PC-3 (cell line): ENCODE measurements at regions of chr12 and their contacts with region 1.

Region 1: GRCh38 chr12:92928962-92929915 is at the start of gene EEA1:
- DNase-seq: peak; percentile 96
- ATAC-seq: peak; percentile 85
- H3K4me3 ChIP-seq: peak within 1 kb of the TSS; percentile 82
- H3K27ac ChIP-seq: peak within 1 kb of the TSS; percentile 74
- H3K4me1 ChIP-seq: peaks cover 24% of the 10 kb centered on the region
- H3K27me3 ChIP-seq: no peaks in the 10 kb centered on the region
- CTCF ChIP-seq: no peak
- total RNA-seq, gene EEA1: 7.9 and 11.9 TPM in 2 replicates

Region 2: DNA sequence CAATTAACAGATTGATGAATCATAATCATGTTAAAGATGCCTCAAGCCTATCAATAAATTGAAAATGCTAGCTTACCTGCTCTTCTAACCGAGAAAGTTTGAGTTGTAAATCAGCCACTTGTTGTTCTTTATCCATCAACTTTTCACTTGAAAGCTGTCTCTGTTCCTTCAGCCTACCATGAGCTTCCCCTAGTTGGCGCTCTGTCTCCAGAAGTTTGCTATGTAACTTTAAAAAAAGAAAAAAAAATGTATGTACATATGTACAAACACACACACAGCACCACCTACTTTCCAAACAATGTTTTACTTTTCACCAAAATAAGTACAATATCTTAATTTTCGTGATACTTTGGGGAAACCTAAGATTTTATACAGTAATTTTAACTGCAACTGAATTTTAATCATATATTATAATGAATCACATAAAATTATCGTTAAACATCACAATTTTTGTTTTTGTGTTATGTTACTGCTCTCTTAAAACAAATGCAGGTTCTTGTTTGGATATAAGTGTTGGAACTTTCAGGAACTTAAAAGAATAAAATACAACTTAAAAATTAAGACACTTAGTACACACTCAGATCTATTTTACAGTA is 101.3 kb before region 1 on chr12:
- CTCF ChIA-PET with region 1: interaction called, 12 read pairs
- POLR2A ChIA-PET with region 1: no interaction called
- intact Hi-C with region 1: loop called (anchors 5 kb)
- DNase-seq: peak; percentile 72
- ATAC-seq: peak; percentile 53
- H3K4me3 ChIP-seq: no peak overlapping the region
- H3K27ac ChIP-seq: no peak overlapping the region
- H3K4me1 ChIP-seq: no peaks in the 10 kb centered on the region
- H3K27me3 ChIP-seq: no peaks in the 10 kb centered on the region
- CTCF ChIP-seq: peak; percentile 96

Region 3: DNA sequence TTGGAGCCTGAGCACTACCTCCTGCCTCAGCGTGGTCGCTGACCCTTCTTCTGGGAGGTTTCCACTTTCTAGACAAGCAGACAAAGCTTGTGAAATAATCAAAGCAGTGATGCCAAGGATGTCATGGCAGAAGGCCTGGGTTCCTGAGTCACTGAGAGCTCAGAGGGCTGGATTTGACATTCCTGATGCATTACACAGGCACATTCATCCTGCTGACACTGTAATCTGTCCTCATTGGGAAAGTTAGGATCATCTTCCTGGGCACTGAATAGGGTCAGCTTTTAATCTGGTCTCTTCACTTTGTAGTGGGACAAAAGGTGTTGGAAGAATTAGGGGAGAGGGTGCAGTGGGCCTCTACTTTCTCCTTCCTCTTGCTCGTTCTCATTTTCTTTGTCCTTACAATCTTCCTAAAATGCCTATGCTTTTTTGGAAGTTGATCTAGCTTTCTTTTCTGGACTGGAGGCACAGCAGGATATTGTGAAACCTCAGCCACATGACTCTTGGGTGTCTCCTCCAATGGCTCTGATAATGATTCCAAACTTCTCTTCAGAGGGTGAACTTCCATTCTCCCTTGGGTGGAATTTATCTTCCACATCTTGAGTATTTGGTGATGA is 29.7 kb before region 1 on chr12:
- CTCF ChIA-PET with region 1: no interaction called
- POLR2A ChIA-PET with region 1: interaction called, 3 read pairs
- intact Hi-C with region 1: loop called (anchors 1 kb)
- DNase-seq: peak; percentile 98
- ATAC-seq: peak; percentile 98
- H3K4me3 ChIP-seq: peak overlapping the region; percentile 47; the same call in 1 of the 2 replicates
- H3K27ac ChIP-seq: peak overlapping the region; percentile 82
- H3K4me1 ChIP-seq: peaks cover 30% of the 10 kb centered on the region
- H3K27me3 ChIP-seq: no peaks in the 10 kb centered on the region
- CTCF ChIP-seq: no peak

Region 4: GRCh38 chr12:92943482-92944250 is 14.4 kb after region 1 on chr12:
- CTCF ChIA-PET with region 1: no interaction called
- POLR2A ChIA-PET with region 1: interaction called, 15 read pairs
- intact Hi-C with region 1: no loop called
- DNase-seq: no peak
- ATAC-seq: peak; percentile 42; the same call in 1 of the 2 replicates
- H3K4me3 ChIP-seq: no peak overlapping the region
- H3K27ac ChIP-seq: no peak overlapping the region
- H3K4me1 ChIP-seq: 0 out of 2 replicates have a peak, but pooled peaks cover 4% of the 10 kb centered on the region
- H3K27me3 ChIP-seq: no peaks in the 10 kb centered on the region
- CTCF ChIP-seq: peak; percentile 32; the same call in 1 of the 2 replicates

Region 5: DNA sequence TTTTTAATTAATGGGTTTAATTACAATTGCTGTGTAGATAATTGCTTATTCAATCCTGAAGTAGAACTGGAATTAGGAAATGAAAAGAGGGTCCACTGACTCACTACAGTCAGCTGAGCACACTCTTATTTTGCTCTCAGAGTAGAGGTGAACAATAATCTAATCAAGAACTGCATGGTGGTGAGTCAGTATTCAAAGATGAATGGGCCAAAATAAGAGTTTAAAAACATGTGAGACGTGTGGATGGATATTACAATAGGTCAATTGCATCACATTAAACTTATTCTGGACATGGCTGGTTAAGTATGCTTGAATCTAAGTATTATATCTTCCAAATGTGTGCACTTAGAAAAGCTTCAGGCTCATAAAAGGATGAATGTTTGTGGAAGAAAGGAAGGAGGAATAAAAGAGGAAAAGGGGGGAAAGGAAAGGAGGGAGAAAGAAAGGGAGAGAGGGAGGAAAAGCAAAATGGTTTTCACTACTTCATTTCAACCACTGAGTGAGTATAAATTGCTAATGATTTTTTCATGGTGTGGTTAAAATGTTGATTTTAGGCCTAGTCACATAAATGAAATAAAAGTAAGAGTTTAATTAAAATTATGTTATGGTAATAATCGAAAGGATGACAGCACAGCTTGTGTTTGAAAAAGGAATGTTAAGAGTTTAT is 26.9 kb after region 1 on chr12:
- CTCF ChIA-PET with region 1: no interaction called
- POLR2A ChIA-PET with region 1: no interaction called
- intact Hi-C with region 1: no loop called
- DNase-seq: no peak
- ATAC-seq: no peak
- H3K4me3 ChIP-seq: no peak overlapping the region
- H3K27ac ChIP-seq: no peak overlapping the region
- H3K4me1 ChIP-seq: no peaks in the 10 kb centered on the region
- H3K27me3 ChIP-seq: no peaks in the 10 kb centered on the region
- CTCF ChIP-seq: no peak

Region 6: GRCh38 chr12:92973601-92974000 is 44.4 kb after region 1 on chr12:
- CTCF ChIA-PET with region 1: no interaction called
- POLR2A ChIA-PET with region 1: interaction called, 3 read pairs
- intact Hi-C with region 1: loop called (anchors 5 kb)
- DNase-seq: peak; percentile 73
- ATAC-seq: no peak
- H3K4me3 ChIP-seq: no peak overlapping the region
- H3K27ac ChIP-seq: no peak overlapping the region
- H3K4me1 ChIP-seq: peaks cover 29% of the 10 kb centered on the region
- H3K27me3 ChIP-seq: no peaks in the 10 kb centered on the region
- CTCF ChIP-seq: no peak

Region 7: GRCh38 chr12:93098077-93098476 is 168.8 kb after region 1 on chr12:
- CTCF ChIA-PET with region 1: no interaction called
- POLR2A ChIA-PET with region 1: no interaction called
- intact Hi-C with region 1: no loop called
- DNase-seq: peak; percentile 72
- ATAC-seq: no peak
- H3K4me3 ChIP-seq: no peak overlapping the region
- H3K27ac ChIP-seq: no peak overlapping the region
- H3K4me1 ChIP-seq: peaks cover 1% of the 10 kb centered on the region; the same call in 1 of the 2 replicates
- H3K27me3 ChIP-seq: no peaks in the 10 kb centered on the region
- CTCF ChIP-seq: peak; percentile 48